T-cell (primary cell): ENCODE measurements at regions of chr3 and their contacts with region 1.

Region 1: DNA sequence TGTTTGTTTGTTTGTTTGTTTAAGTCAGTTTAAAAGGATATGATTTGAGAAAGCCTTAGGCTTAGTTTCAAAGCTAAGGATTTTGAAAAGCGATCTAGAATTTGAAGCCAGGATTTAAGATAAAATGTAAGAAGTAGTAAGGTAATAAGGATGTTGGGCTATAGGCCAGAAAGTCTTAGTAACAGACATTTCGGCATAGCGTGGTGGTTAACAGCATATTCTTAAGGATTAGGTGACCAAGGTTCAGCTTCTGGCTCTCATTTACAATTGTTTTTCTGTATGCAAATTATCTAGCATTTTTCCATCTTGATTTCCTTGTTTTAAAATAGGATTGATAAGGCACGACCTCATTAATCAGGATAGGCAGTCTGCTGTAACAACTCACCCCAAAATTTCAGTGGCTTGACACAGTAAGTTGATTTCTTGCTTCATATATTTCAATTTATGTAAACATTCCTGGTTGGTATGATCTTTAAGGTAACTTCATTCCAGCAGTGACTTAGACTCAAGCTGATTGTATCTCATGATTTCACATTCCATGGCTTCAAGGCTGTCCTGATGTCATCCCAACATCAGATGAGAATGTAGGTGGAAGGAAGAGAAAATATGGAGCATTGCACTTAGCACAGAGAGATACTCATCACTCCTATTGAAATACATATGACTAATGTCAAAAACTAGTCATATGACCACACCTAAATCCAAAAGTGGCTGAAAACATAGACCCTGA is 794.0 kb downstream of the TBL1XR1 start:
- DNase-seq: no peak
- ATAC-seq: no peak
- H3K4me3 ChIP-seq: no peak overlapping the region
- H3K4me3 Mint-ChIP-seq: no peak overlapping the region
- H3K27ac ChIP-seq: no peak overlapping the region
- H3K27ac Mint-ChIP-seq: no peak overlapping the region
- H3K4me1 ChIP-seq: no peaks in the 10 kb centered on the region
- H3K4me1 Mint-ChIP-seq: no peaks in the 10 kb centered on the region
- H3K27me3 ChIP-seq: no peaks in the 10 kb centered on the region
- H3K27me3 Mint-ChIP-seq: no peaks in the 10 kb centered on the region

Region 2: DNA sequence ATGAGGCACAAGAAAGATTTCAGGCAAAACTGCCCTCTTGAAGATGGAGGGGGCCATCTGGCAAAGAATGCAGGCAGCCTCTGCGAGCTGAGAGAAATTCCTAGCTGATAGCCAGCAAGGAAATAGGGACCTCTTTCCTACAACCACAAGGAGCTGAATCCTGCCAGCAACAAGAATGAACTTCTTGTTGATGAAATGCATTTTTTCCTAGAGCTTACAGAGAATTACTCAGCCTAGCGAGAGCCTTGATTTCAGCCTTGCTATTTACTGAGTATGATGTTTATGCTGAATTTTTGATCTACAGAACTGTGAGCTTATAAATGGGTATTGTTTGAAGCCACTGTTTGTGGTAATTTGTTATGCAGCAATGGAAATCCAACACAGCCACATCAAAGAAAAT is 1692.7 kb before region 1 on chr3:
- CTCF ChIA-PET with region 1: interaction called in 1 of 2 experiments, 10 read pairs
- POLR2A ChIA-PET with region 1: no interaction called
- DNase-seq: no peak
- ATAC-seq: no peak
- H3K4me3 ChIP-seq: no peak overlapping the region
- H3K4me3 Mint-ChIP-seq: no peak overlapping the region
- H3K27ac ChIP-seq: no peak overlapping the region
- H3K27ac Mint-ChIP-seq: no peak overlapping the region
- H3K4me1 ChIP-seq: no peaks in the 10 kb centered on the region
- H3K4me1 Mint-ChIP-seq: no peaks in the 10 kb centered on the region
- H3K27me3 ChIP-seq: no peaks in the 10 kb centered on the region
- H3K27me3 Mint-ChIP-seq: no peaks in the 10 kb centered on the region